ENCODE measurements at regions of chr22 and their contacts with region 1.

Region 1: GRCh38 chr22:37588546-37589215 is 8.8 kb upstream of the LGALS2 start:
- DNase-seq: no peak
- ATAC-seq: no peak
- H3K4me3 ChIP-seq: no peak overlapping the region
- H3K27ac ChIP-seq: no peak overlapping the region
- H3K4me1 ChIP-seq: no peaks in the 10 kb centered on the region
- H3K27me3 ChIP-seq: no peaks in the 10 kb centered on the region
- CTCF ChIP-seq: no peak

Region 2: DNA sequence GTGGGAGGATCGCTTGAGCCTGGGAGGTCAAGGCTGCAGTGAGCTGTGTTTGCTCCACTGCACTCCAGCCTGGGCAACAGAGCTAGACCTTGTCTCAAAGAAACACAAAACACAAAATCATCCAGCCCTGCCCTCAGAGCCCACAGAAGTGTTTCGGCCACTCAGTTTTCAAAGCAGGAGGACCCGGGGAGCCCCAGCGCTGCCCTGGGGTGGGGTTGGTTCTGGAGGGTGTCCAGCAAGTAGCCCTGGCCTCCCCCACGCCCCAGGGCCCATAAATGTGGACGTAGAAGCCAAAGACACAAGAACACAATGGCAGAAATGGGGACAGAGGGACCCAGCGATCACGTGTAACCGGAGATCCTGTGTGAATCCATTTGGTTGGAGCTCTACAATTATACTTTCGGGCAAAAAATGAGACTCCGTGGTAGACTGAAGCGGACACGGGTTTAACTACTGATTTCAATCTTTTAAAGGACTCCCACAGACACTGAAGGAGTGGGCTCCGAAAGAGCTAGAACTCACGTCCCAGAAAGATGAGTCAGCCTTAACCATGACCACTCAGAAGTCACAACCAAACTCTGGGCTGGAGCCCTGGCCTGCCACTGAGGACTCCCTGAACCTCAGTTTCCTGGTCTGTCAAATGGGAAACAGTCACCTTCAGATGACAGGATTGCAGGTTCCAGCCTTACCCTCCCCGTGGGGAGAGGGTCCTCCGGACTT is 315.4 kb before region 1 on chr22:
- CTCF ChIA-PET with region 1: interaction called, 10 read pairs
- POLR2A ChIA-PET with region 1: no interaction called
- intact Hi-C with region 1: no loop called
- DNase-seq: peak; percentile 24
- ATAC-seq: peak; percentile 59
- H3K4me3 ChIP-seq: no peak overlapping the region
- H3K27ac ChIP-seq: no peak overlapping the region
- H3K4me1 ChIP-seq: peaks cover 7% of the 10 kb centered on the region
- H3K27me3 ChIP-seq: no peaks in the 10 kb centered on the region
- CTCF ChIP-seq: no peak

Region 3: DNA sequence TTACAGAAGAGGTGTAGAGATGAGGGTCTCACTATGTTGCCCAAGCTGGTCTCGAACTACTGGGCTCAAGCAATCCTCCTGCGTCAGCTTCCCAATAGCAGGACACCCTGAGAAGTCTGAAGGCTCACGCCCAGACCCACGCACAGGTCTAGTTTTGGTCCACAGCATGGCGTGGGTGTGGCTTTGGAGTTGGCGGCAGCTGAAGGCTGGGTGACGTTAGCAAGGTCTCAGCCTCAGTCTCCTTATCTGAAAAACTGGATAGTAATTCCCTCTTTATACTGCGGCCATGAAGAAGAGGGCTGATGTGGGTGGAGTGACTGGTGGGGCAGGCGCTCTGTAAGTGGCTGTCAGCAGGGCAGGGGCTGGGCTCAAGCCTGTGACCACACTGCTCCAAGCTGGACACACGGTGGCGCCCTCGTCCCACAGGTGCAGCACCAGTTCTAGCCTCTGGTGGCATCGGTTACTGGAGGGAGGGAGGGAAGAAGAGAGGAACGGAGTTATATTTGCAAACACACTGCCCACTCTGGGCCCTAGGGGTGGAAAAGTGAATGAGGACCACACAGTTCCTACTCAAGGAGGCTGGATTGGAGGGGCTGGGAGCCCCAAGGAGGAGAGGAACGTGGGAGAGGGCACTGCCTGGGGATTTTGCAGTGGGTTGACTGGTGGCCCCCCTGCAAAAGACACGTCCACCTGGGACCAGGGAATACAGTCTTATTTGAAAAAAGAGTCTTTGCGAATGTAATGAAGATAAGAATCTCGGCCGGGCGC is 49.9 kb before region 1 on chr22:
- CTCF ChIA-PET with region 1: interaction called, 5 read pairs
- POLR2A ChIA-PET with region 1: no interaction called
- intact Hi-C with region 1: loop called (anchors 1 kb)
- DNase-seq: peak; percentile 89
- ATAC-seq: peak; percentile 89
- H3K4me3 ChIP-seq: peak overlapping the region; percentile 43; the same call in 1 of the 2 replicates
- H3K27ac ChIP-seq: no peak overlapping the region
- H3K4me1 ChIP-seq: peaks cover 22% of the 10 kb centered on the region
- H3K27me3 ChIP-seq: no peaks in the 10 kb centered on the region
- CTCF ChIP-seq: peak; percentile 90

Region 4: GRCh38 chr22:37544955-37545699 is 43.6 kb before region 1 on chr22:
- CTCF ChIA-PET with region 1: interaction called, 6 read pairs
- POLR2A ChIA-PET with region 1: no interaction called
- intact Hi-C with region 1: loop called (anchors 1 kb)
- DNase-seq: peak; percentile 78
- ATAC-seq: peak; percentile 39
- H3K4me3 ChIP-seq: no peak overlapping the region
- H3K27ac ChIP-seq: no peak overlapping the region
- H3K4me1 ChIP-seq: peaks cover 28% of the 10 kb centered on the region
- H3K27me3 ChIP-seq: no peaks in the 10 kb centered on the region
- CTCF ChIP-seq: peak; percentile 74

Region 5: GRCh38 chr22:37566903-37567820 is 21.5 kb before region 1 on chr22:
- CTCF ChIA-PET with region 1: interaction called, 12 read pairs
- POLR2A ChIA-PET with region 1: no interaction called
- intact Hi-C with region 1: no loop called
- DNase-seq: peak; percentile 93
- ATAC-seq: peak; percentile 63
- H3K4me3 ChIP-seq: no peak overlapping the region
- H3K27ac ChIP-seq: peak overlapping the region; percentile 53
- H3K4me1 ChIP-seq: peaks cover 50% of the 10 kb centered on the region
- H3K27me3 ChIP-seq: no peaks in the 10 kb centered on the region
- CTCF ChIP-seq: peak; percentile 89

Region 6: DNA sequence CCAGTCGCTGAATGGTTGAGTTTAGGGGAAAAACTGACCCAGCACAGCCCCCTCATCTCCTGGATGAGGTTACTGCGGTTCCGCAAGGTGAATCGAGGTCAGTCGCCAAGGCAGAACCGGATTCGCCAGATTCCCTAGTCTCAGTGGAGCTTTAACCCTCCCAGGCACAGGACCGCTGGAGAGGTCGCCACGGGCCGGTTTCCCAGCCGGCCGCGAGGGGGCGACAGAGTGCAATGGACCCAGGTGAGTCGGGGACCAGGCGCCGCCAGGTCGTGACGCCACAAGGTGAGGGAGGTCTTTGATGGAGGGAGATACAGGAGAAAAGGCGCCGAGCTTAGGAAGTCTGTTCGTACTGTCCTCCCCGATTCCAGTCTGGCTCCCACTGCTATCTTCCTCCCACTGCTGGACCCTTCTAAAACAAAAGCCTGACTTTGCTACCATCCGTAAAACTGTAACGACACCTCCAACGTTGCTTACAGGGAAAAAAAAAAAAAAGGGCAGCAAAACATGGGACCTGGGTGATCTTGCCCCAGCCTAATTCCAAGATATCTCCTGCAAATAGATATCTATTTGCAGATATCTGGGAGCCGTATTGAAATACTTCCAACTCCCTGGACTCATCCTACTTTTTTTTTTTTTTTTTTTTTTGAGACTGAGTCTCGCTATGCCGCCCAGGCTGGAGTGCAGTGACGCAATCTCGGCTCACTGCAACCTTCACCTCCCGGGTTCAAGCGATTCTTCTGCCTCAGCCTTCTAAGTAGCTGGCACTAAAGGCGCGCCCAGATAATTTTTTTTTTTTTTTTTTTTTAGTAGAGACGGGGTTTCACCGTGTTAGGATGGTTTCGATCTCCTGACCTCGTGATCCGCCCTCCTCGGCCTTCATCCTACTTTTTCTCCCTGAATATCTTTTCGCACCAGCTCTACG is 18.6 kb after region 1 on chr22:
- CTCF ChIA-PET with region 1: interaction called, 12 read pairs
- POLR2A ChIA-PET with region 1: interaction called, 4 read pairs
- intact Hi-C with region 1: no loop called
- DNase-seq: peak; percentile 91
- ATAC-seq: peak; percentile 39
- H3K4me3 ChIP-seq: peak overlapping the region; percentile 57; the same call in 1 of the 2 replicates
- H3K27ac ChIP-seq: no peak overlapping the region
- H3K4me1 ChIP-seq: peaks cover 7% of the 10 kb centered on the region
- H3K27me3 ChIP-seq: no peaks in the 10 kb centered on the region
- CTCF ChIP-seq: peak; percentile 89

Measured in PC-3 (cell line).